Mammary epithelial cell (primary cell): ENCODE measurements at regions of chr2 and their contacts with region 1.

Region 1: DNA sequence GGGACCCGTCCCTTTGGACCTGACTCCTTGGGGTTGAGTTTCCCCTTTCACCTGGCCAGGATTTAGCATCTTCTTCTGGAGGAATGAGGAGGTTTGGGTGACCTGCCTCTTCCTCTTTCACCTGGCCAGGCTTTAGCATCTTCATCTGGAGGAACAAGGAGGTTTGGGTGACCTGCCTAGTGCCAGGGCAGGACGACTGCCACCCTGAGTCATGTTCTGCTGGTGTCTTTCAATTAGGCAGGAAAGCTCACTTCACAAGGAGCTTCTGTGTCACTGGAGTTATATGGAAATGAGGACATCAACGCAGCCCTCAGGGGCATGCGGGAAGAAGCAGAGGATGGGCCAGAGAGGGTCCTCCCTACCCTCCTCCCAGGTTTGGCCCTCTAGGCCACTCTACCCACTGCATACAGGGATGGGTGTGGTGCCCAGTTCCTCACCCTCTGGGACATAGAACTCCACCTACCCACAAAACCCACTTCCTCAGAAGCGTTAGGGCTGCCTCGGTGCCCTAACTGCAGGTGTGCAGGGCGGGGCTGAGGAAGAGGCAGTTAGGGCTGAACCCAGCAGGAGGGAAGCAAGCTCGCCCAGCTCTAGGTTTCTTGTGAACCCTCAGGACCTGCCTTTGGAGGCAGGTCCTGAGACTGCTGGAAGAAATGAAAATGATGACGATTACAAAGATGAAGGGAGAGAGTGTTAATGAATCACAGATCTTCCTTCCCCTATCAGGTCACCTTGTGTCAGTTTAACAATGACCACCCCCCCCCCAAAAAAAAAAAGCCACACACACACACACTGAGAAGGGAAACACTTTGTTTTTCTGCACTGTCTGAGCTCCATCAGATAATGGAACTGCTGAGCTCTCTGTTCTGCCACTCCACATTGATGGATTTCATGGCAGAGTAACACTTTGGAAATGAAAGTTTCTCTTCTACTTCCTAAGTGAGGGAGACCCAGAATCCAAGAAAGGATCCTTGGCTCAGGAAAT is 71.0 kb downstream of the ARL4C start:
- DNase-seq: peak; percentile 68
- H3K4me3 ChIP-seq: no peak overlapping the region
- H3K27ac ChIP-seq: no peak overlapping the region
- H3K4me1 ChIP-seq: peaks cover 48% of the 10 kb centered on the region
- H3K27me3 ChIP-seq: no peaks in the 10 kb centered on the region
- CTCF ChIP-seq: no peak

Region 2: DNA sequence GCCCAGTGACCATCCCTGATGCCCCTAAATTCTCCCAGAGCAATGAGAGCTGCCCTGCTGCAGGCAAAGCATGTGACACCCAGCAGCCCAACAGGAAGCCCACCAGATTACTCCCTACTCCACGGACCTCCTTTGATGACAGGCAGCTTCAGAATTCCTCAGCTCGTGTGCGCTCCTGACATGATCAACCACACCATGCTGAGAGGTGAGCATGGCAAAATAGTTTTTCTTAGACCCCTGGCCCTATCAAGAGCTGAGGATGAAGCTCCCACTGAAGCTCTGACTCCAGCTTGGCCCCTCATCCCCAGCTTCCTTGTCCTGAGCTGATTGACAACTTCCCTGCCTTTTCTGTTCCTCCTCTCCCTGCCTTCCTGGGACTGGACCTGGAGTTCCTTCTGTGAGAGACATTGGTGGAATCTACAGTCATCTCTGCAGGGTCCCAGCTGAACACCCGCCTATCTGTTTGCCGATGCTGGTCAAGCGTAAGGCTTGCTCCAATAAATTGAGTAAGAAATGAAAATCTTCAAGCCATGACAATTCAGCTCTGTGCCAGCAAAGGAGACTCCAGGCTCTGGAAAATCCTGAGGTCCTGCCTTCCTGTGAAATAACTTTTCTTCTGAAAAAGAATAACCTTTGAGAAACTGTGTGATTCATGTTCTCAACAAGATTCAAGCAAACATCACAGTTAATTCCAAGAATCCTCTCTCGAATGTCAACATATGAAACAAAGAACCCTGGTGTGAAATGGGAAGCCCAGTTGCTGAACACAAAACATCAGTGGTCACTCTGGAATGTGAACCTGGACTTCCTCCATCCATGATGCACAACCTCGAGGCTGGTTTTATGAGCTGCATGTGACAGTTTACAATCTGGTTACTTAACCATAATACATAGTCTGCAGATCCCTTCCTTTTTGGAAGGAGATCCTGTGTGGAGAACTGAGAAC is 174.3 kb before region 1 on chr2:
- CTCF ChIA-PET with region 1: no interaction called
- dilution Hi-C with region 1: no loop called
- in situ Hi-C with region 1: no loop called
- intact Hi-C with region 1: loop called (anchors 2 kb)
- DNase-seq: peak; percentile 99
- H3K4me3 ChIP-seq: no peak overlapping the region
- H3K27ac ChIP-seq: peak overlapping the region; percentile 98
- H3K4me1 ChIP-seq: peaks cover 71% of the 10 kb centered on the region
- H3K27me3 ChIP-seq: no peaks in the 10 kb centered on the region
- CTCF ChIP-seq: no peak

Region 3: GRCh38 chr2:234288974-234289455 is 136.9 kb before region 1 on chr2:
- CTCF ChIA-PET with region 1: no interaction called
- dilution Hi-C with region 1: no loop called
- in situ Hi-C with region 1: no loop called
- intact Hi-C with region 1: loop called (anchors 5 kb)
- DNase-seq: peak; percentile 24
- H3K4me3 ChIP-seq: no peak overlapping the region
- H3K27ac ChIP-seq: no peak overlapping the region
- H3K4me1 ChIP-seq: peaks cover 32% of the 10 kb centered on the region
- H3K27me3 ChIP-seq: no peaks in the 10 kb centered on the region
- CTCF ChIP-seq: peak; percentile 61 to 78

Region 4: DNA sequence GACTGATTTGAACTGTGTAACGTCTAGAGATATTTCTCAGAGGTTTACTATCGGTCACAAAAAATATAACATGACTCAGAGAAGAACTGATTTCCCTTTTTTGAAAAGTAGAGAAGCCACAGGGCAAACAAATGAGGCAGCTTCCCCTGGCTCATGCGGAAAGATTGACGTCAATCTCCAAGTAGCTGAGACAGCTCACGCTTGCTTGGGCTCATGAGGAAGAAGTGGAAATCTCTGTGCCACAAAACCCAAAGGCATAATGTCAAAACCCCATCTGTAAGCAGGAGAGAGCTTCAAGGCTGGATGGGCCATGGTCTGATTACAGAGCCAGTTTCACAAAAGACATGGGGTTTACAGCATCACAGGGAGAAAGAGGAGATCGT is 117.1 kb before region 1 on chr2:
- CTCF ChIA-PET with region 1: no interaction called
- dilution Hi-C with region 1: no loop called
- in situ Hi-C with region 1: no loop called
- intact Hi-C with region 1: loop called (anchors 5 kb)
- DNase-seq: no peak
- H3K4me3 ChIP-seq: no peak overlapping the region
- H3K27ac ChIP-seq: no peak overlapping the region
- H3K4me1 ChIP-seq: peaks cover 26% of the 10 kb centered on the region
- H3K27me3 ChIP-seq: no peaks in the 10 kb centered on the region
- CTCF ChIP-seq: no peak

Region 5: GRCh38 chr2:234335661-234336228 is 90.2 kb before region 1 on chr2:
- CTCF ChIA-PET with region 1: no interaction called
- dilution Hi-C with region 1: no loop called
- in situ Hi-C with region 1: no loop called
- intact Hi-C with region 1: loop called (anchors 10 kb)
- DNase-seq: peak; percentile 84
- H3K4me3 ChIP-seq: no peak overlapping the region
- H3K27ac ChIP-seq: no peak overlapping the region
- H3K4me1 ChIP-seq: peaks cover 11% of the 10 kb centered on the region
- H3K27me3 ChIP-seq: no peaks in the 10 kb centered on the region
- CTCF ChIP-seq: no peak

Region 6: DNA sequence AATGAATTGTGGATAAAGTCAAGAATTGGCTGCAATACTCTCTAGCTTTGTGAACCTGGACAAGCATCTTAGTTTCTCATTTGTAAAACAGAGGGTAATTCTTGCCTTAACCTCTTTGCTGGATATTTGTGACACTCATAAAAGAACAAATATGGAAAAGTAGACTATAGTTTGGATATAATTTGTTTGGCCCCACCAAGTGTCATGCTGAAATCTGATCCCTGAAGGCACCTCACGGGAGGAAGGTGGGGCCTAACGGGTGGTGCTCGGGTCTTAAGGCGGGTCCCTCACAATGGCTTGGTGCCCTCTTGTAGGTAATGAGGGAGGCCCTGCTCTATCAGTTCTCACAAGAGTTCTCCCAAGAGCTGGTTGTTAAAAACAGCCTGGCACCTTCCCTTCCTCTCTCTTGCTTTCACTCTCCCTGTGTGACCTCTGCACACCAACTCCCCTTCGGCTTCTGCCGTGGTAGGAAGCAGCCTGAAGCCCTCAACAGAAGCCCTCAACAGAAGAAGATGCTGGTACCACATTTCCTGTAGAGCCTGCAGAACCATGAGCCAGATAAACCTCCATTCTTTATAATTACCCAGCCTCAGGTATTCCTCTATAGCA is 33.6 kb after region 1 on chr2:
- CTCF ChIA-PET with region 1: no interaction called
- dilution Hi-C with region 1: no loop called
- in situ Hi-C with region 1: no loop called
- intact Hi-C with region 1: no loop called
- DNase-seq: no peak
- H3K4me3 ChIP-seq: no peak overlapping the region
- H3K27ac ChIP-seq: no peak overlapping the region
- H3K4me1 ChIP-seq: no peaks in the 10 kb centered on the region
- H3K27me3 ChIP-seq: no peaks in the 10 kb centered on the region
- CTCF ChIP-seq: no peak

Region 7: DNA sequence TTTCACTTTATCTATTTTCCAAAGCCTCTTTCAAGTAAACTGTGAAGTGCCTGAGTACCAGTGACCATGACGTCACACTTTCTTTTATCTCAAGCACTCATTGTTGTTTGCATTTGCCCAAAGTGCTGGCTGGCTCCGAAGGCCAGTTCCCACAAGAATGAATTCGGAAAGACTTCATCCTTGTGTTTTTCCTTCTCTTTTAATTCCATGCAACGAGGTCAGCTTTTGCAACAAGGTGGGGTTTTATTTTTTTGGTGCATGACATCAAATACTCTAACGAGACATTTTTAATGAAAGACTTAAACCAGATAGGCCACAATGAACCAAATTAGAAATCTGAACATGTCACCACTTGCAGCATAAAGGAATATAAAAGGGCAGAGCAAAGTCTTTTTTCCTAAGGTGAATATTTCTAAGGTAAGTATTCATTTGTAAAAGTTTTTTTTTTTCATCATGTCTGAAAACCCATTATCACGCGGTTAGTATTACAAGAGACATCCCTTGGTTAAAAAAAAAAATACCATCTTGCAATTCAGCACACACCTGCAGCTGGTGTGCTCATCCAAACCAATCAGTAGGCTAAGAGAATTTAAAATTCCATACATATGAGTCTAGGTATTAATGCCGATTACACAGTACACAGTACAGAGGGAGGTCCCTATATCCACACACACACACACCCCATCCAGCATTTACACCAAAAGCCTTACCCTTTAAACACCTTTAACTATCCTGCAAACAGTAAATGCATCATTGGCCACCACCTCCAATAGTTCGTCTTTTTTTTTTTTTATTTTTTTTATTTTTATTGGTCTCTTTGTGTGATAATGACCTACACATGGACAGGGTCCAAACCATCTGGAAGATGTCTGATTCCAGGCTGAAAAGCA is 68.7 kb after region 1 on chr2:
- CTCF ChIA-PET with region 1: no interaction called
- dilution Hi-C with region 1: no loop called
- in situ Hi-C with region 1: no loop called
- intact Hi-C with region 1: loop called (anchors 1 kb)
- DNase-seq: peak; percentile 59
- H3K4me3 ChIP-seq: peak overlapping the region; percentile 86 to 99 (median 97)
- H3K27ac ChIP-seq: peak overlapping the region; percentile 92
- H3K4me1 ChIP-seq: peaks cover 22% of the 10 kb centered on the region
- H3K27me3 ChIP-seq: no peaks in the 10 kb centered on the region
- CTCF ChIP-seq: no peak